PC-3 (cell line): ENCODE measurements at regions of chr3 and their contacts with region 1.

Region 1: GRCh38 chr3:152638707-152639450 is 196.1 kb upstream of the P2RY1 start:
- DNase-seq: no peak
- ATAC-seq: peak; percentile 48
- H3K4me3 ChIP-seq: no peak overlapping the region
- H3K27ac ChIP-seq: no peak overlapping the region
- H3K4me1 ChIP-seq: no peaks in the 10 kb centered on the region
- H3K27me3 ChIP-seq: peaks cover 53% of the 10 kb centered on the region
- CTCF ChIP-seq: no peak

Region 2: GRCh38 chr3:152650177-152650576 is 11.3 kb after region 1 on chr3:
- CTCF ChIA-PET with region 1: no interaction called
- POLR2A ChIA-PET with region 1: interaction called, 14 read pairs
- intact Hi-C with region 1: no loop called
- DNase-seq: no peak
- ATAC-seq: no peak
- H3K4me3 ChIP-seq: no peak overlapping the region
- H3K27ac ChIP-seq: no peak overlapping the region
- H3K4me1 ChIP-seq: no peaks in the 10 kb centered on the region
- H3K27me3 ChIP-seq: peaks cover 62% of the 10 kb centered on the region
- CTCF ChIP-seq: no peak

Region 3: GRCh38 chr3:152885076-152885475 is 246.2 kb after region 1 on chr3:
- CTCF ChIA-PET with region 1: no interaction called
- POLR2A ChIA-PET with region 1: no interaction called
- intact Hi-C with region 1: no loop called
- DNase-seq: no peak
- ATAC-seq: no peak
- H3K4me3 ChIP-seq: no peak overlapping the region
- H3K27ac ChIP-seq: no peak overlapping the region
- H3K4me1 ChIP-seq: no peaks in the 10 kb centered on the region
- H3K27me3 ChIP-seq: peaks cover 4% of the 10 kb centered on the region; the same call in 1 of the 2 replicates
- CTCF ChIP-seq: no peak